Natural killer cell (primary cell): ENCODE measurements at regions of chr19 and their contacts with region 1.

Region 1: DNA sequence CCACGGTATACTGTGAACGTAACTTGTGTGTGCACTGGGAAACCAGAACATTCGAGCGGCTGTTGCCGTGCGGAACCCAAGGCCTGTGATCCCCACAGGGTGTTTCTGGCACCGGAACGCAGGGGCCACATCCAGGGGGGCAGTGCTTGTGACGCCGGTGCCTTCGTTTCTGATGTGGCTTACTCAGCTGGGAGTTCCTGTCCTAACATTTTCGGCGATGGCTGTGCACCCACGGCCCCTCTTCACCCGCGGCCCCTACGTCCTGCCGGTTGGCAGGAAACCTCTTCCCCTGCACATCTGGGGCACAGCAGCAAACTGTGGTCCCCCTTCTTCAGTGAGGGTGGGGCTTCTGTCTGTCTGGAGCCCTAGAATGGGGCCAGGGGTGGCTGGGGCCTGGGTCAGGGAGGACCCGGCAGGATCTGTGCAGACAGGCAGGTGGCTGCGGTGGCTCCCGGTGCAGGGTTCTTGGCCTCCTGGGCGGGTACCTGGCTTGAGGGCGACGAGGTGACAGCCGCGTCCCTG is 26.2 kb downstream of the CSNK1G2 start:
- DNase-seq: peak; percentile 49 to 65
- ATAC-seq: peak; percentile 79 to 86 (median 80)
- H3K4me3 ChIP-seq: no peak overlapping the region
- H3K4me3 Mint-ChIP-seq: peak overlapping the region; percentile 77
- H3K27ac ChIP-seq: peak overlapping the region; percentile 68
- H3K27ac Mint-ChIP-seq: peak overlapping the region; percentile 73 to 81
- H3K4me1 ChIP-seq: peaks cover 29% of the 10 kb centered on the region
- H3K4me1 Mint-ChIP-seq: peaks cover 14 to 26% of the 10 kb centered on the region in 2 donors
- H3K27me3 ChIP-seq: no peaks in the 10 kb centered on the region
- H3K27me3 Mint-ChIP-seq: no peaks in the 10 kb centered on the region
- CTCF ChIP-seq: no peak

Region 2: GRCh38 chr19:1929021-1929742 is 38.0 kb before region 1 on chr19:
- intact Hi-C with region 1: loop called (anchors 5 kb)
- DNase-seq: peak; percentile 87 to 89
- ATAC-seq: peak; percentile 94
- H3K4me3 ChIP-seq: peak overlapping the region; percentile 42
- H3K4me3 Mint-ChIP-seq: peak overlapping the region; percentile 92
- H3K27ac ChIP-seq: no peak overlapping the region
- H3K27ac Mint-ChIP-seq: peak overlapping the region; percentile 68 to 74
- H3K4me1 ChIP-seq: peaks cover 37% of the 10 kb centered on the region
- H3K4me1 Mint-ChIP-seq: peaks cover 9 to 32% of the 10 kb centered on the region in 2 donors
- H3K27me3 ChIP-seq: no peaks in the 10 kb centered on the region
- H3K27me3 Mint-ChIP-seq: peaks cover 0 to 3% of the 10 kb centered on the region in 2 donors
- CTCF ChIP-seq: peak; percentile 93